ENCODE measurements at regions of chr1 and their contacts with region 1.

Region 1: GRCh38 chr1:222754366-222755139 is 17.6 kb downstream of the FAM177B start:
- DNase-seq: no peak
- ATAC-seq: no peak
- H3K4me3 ChIP-seq: no peak overlapping the region
- H3K4me3 Mint-ChIP-seq: peak overlapping the region; percentile 58
- H3K27ac ChIP-seq: no peak overlapping the region
- H3K27ac Mint-ChIP-seq: peak overlapping the region; percentile 79
- H3K4me1 ChIP-seq: peaks cover 56 to 57% of the 10 kb centered on the region in 2 donors
- H3K4me1 Mint-ChIP-seq: peaks cover 58% of the 10 kb centered on the region
- H3K27me3 ChIP-seq: no peaks in the 10 kb centered on the region
- H3K27me3 Mint-ChIP-seq: no peaks in the 10 kb centered on the region
- CTCF ChIP-seq: no peak

Region 2: GRCh38 chr1:222732216-222733159 is 22.1 kb before region 1 on chr1:
- CTCF ChIA-PET with region 1: interaction called, 20 read pairs
- POLR2A ChIA-PET with region 1: interaction called, 5 read pairs
- intact Hi-C with region 1: no loop called
- DNase-seq: peak; percentile 84
- ATAC-seq: peak; percentile 82
- H3K4me3 ChIP-seq: peak overlapping the region in 3 of 5 experiments; percentile 13 to 45 (median 27)
- H3K4me3 Mint-ChIP-seq: peak overlapping the region; percentile 78
- H3K27ac ChIP-seq: peak overlapping the region; percentile 62 to 84
- H3K27ac Mint-ChIP-seq: peak overlapping the region; percentile 93
- H3K4me1 ChIP-seq: peaks cover 56 to 68% of the 10 kb centered on the region in 2 donors
- H3K4me1 Mint-ChIP-seq: peaks cover 56% of the 10 kb centered on the region
- H3K27me3 ChIP-seq: no peaks in the 10 kb centered on the region
- H3K27me3 Mint-ChIP-seq: no peaks in the 10 kb centered on the region
- CTCF ChIP-seq: no peak

Region 3: DNA sequence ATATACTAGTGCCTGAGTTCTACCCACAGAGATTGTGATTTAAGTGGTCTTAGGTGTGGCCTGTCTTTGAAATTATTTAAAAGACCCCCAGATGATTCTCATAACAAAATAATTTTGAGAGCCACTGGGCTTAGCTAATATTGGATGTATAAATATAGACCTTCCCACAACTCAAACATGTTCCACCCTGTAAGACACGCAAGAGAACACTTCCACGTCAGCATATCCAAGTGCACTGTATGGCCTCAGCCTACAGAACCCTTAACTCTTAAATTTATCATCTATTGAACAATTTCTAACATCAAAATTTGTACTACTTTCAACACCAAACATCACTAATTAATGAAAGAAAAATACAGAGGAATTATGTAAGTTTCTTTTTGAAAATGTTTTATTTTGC is 15.1 kb before region 1 on chr1:
- CTCF ChIA-PET with region 1: interaction called, 31 read pairs
- POLR2A ChIA-PET with region 1: interaction called, 5 read pairs
- intact Hi-C with region 1: loop called (anchors 2 kb)
- DNase-seq: no peak
- ATAC-seq: no peak
- H3K4me3 ChIP-seq: peak overlapping the region; percentile 17 to 53 (median 33)
- H3K4me3 Mint-ChIP-seq: no peak overlapping the region
- H3K27ac ChIP-seq: peak overlapping the region; percentile 50 to 77
- H3K27ac Mint-ChIP-seq: no peak overlapping the region
- H3K4me1 ChIP-seq: peaks cover 58 to 61% of the 10 kb centered on the region in 2 donors
- H3K4me1 Mint-ChIP-seq: peaks cover 44% of the 10 kb centered on the region
- H3K27me3 ChIP-seq: no peaks in the 10 kb centered on the region
- H3K27me3 Mint-ChIP-seq: no peaks in the 10 kb centered on the region
- CTCF ChIP-seq: no peak

Region 4: GRCh38 chr1:222786121-222786520 is 31.6 kb after region 1 on chr1:
- CTCF ChIA-PET with region 1: interaction called, 5 read pairs
- POLR2A ChIA-PET with region 1: no interaction called
- intact Hi-C with region 1: loop called (anchors 5 kb)
- DNase-seq: no peak
- ATAC-seq: no peak
- H3K4me3 ChIP-seq: no peak overlapping the region
- H3K4me3 Mint-ChIP-seq: no peak overlapping the region
- H3K27ac ChIP-seq: no peak overlapping the region
- H3K27ac Mint-ChIP-seq: no peak overlapping the region
- H3K4me1 ChIP-seq: peaks cover 17 to 21% of the 10 kb centered on the region in 2 donors
- H3K4me1 Mint-ChIP-seq: peaks cover 60% of the 10 kb centered on the region
- H3K27me3 ChIP-seq: no peaks in the 10 kb centered on the region
- H3K27me3 Mint-ChIP-seq: no peaks in the 10 kb centered on the region
- CTCF ChIP-seq: no peak

Measured in B cell (primary cell).